HEK293 (cell line): ENCODE measurements at regions of chr7 and their contacts with region 1.

Region 1: GRCh38 chr7:118195837-118196474 is 12.0 kb downstream of the LSM8 start:
- H3K4me3 ChIP-seq: no peak overlapping the region
- H3K27ac ChIP-seq: no peak overlapping the region
- H3K4me1 ChIP-seq: no peaks in the 10 kb centered on the region
- CTCF ChIP-seq: no peak; the same call in 1 of the 2 replicates

Region 2: GRCh38 chr7:118109607-118110006 is 86.3 kb before region 1 on chr7:
- CTCF ChIA-PET with region 1: no interaction called
- POLR2A ChIA-PET with region 1: no interaction called
- H3K4me3 ChIP-seq: no peak overlapping the region
- H3K27ac ChIP-seq: no peak overlapping the region
- H3K4me1 ChIP-seq: no peaks in the 10 kb centered on the region
- CTCF ChIP-seq: no peak

Region 3: DNA sequence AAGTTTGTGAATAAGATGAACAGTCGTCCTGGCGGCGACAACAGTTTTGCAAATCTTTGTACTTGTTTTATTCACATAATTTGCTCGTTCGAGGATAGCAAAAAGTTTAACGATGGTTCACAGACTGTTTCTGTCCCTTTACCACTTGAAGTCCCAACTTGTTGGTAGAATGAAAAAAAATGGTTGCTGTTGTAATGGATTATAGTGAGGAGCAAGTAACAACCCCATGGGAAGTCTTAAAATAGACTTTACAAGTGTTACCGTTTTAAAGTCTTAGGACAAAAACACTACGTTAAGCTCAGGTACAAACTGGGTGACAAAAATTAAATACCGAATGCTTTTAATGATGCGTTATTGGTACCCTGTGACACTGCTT is 11.4 kb before region 1 on chr7:
- CTCF ChIA-PET with region 1: interaction called, 15 read pairs
- POLR2A ChIA-PET with region 1: no interaction called
- H3K4me3 ChIP-seq: peak overlapping the region; percentile 98
- H3K27ac ChIP-seq: peak overlapping the region; percentile 69; the same call in 1 of the 2 replicates
- H3K4me1 ChIP-seq: no peaks in the 10 kb centered on the region; the same call in 1 of the 2 replicates
- CTCF ChIP-seq: no peak

Region 4: DNA sequence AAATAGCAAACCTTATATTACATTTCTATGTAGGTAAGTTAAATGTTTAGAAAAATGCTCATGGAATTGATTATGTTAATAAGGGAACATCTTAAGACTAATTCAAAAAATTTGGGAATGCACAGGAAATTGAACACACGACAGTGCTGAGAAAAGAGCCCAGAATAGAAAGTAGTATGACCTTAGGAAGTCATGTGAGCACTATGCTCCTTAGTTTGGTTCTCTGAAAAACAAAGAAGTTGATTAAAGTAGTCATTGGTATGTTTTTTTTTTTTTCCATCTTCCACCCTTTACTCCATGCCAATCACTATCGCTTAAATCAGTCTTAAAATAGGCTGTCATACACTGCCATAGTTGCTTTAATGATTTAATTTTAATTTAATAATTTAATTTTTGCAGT is 271.4 kb after region 1 on chr7:
- CTCF ChIA-PET with region 1: no interaction called
- POLR2A ChIA-PET with region 1: no interaction called
- H3K4me3 ChIP-seq: no peak overlapping the region
- H3K27ac ChIP-seq: no peak overlapping the region
- H3K4me1 ChIP-seq: no peaks in the 10 kb centered on the region
- CTCF ChIP-seq: no peak